ENCODE measurements at regions of chr2 and their contacts with region 1.

Region 1: GRCh38 chr2:19675856-19676460 is 225.8 kb downstream of the TTC32 start:
- DNase-seq: no peak
- H3K4me3 ChIP-seq: no peak overlapping the region
- H3K27ac ChIP-seq: peak overlapping the region; percentile 69 to 76
- H3K4me1 ChIP-seq: no peaks in the 10 kb centered on the region
- H3K27me3 ChIP-seq: no peaks in the 10 kb centered on the region
- CTCF ChIP-seq: no peak
- POLR2A ChIP-seq: no peak

Region 2: GRCh38 chr2:18198677-18199076 is 1477.3 kb before region 1 on chr2:
- intact Hi-C with region 1: loop called (anchors 5 kb)
- DNase-seq: no peak
- H3K4me3 ChIP-seq: no peak overlapping the region
- H3K27ac ChIP-seq: no peak overlapping the region
- H3K4me1 ChIP-seq: no peaks in the 10 kb centered on the region
- H3K27me3 ChIP-seq: no peaks in the 10 kb centered on the region
- CTCF ChIP-seq: no peak
- POLR2A ChIP-seq: no peak

Region 3: GRCh38 chr2:20986024-20986939 is 1310.3 kb after region 1 on chr2:
- intact Hi-C with region 1: no loop called
- DNase-seq: no peak
- H3K4me3 ChIP-seq: no peak overlapping the region
- H3K27ac ChIP-seq: no peak overlapping the region
- H3K4me1 ChIP-seq: no peaks in the 10 kb centered on the region
- H3K27me3 ChIP-seq: no peaks in the 10 kb centered on the region
- CTCF ChIP-seq: no peak
- POLR2A ChIP-seq: no peak

Measured in breast epithelium (tissue), 4 donors.